ENCODE measurements at regions of chr11 and their contacts with region 1.

Region 1: GRCh38 chr11:88179971-88180629 is 4.9 kb upstream of the RAB38 start:
- DNase-seq: no peak
- H3K4me3 Mint-ChIP-seq: no peak overlapping the region
- H3K27ac Mint-ChIP-seq: no peak overlapping the region
- H3K4me1 Mint-ChIP-seq: peaks cover 45% of the 10 kb centered on the region
- H3K27me3 Mint-ChIP-seq: peaks cover 14% of the 10 kb centered on the region

Region 2: DNA sequence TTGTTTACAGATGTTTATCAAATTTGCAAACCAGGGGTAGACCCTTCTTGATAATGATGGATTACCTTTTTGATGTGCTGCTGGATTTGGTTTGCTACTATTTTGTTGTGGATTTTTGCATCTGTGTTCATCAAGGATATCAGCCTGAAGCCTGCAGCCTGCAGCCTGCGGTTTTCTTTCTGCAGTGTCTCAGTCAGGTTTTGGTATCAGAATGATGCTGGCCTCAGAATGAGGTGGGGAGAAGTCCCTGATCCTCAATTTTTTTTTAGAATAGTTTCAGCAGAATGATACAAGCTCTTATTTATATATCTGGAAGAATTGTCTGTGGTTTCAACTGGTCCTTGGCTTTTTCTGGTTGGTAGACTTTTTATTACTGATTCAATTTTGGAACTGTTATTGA is 14.9 kb after region 1 on chr11:
- intact Hi-C with region 1: no loop called
- DNase-seq: no peak
- H3K4me3 Mint-ChIP-seq: no peak overlapping the region
- H3K27ac Mint-ChIP-seq: no peak overlapping the region
- H3K4me1 Mint-ChIP-seq: no peaks in the 10 kb centered on the region
- H3K27me3 Mint-ChIP-seq: peaks cover 27% of the 10 kb centered on the region

Region 3: GRCh38 chr11:88421530-88421929 is 241.4 kb after region 1 on chr11:
- intact Hi-C with region 1: loop called (anchors 2 kb)
- DNase-seq: peak; percentile 43
- H3K4me3 Mint-ChIP-seq: peak overlapping the region; percentile 67
- H3K27ac Mint-ChIP-seq: peak overlapping the region; percentile 90
- H3K4me1 Mint-ChIP-seq: peaks cover 69% of the 10 kb centered on the region
- H3K27me3 Mint-ChIP-seq: no peaks in the 10 kb centered on the region

Measured in activated T-helper 1 cell treated with anti-CD3 and anti-CD28 coated beads, Interleukin-12 subunit alpha, Interleukin-12 subunit beta, Interleukin-2, Interleukin-4 antibody, amounts not matched to agents 30 ng/mL and 10 ng/mL and 1 ng/mL, durations not matched to agents 14 hours and 24 hours and 36 hours (primary cell).